ENCODE measurements at regions of chr9 and their contacts with region 1.

Region 1: DNA sequence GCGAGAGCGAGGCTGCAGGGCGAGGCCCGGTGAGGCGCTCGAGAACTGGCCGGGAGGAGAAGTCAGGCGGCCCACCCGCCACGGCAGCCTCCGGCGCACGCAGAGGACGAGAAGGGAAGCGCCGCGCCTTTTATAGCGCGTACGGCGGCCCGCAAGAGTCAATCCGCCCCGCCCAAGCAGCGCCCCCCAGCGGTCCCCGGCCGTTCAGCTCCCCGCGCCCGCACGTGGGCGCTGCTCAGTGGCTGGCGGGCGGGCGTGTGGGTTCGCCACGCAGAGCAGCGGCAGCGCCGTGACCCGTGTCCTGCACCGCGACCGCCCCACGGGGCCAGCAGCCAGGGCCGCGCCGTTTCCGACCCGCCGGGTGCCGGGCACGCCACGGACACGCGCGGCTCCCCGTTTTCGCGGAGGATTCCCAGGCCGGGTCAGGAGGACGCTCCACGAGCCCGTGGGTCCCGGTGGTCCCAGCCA is 14.6 kb downstream of the LCN10 start:
- DNase-seq: peak; percentile 89 to 95 (median 93)
- H3K4me3 ChIP-seq: peak overlapping the region; percentile 73 to 99 (median 82)
- H3K27ac ChIP-seq: peak overlapping the region; percentile 54 to 84
- H3K4me1 ChIP-seq: peaks cover 4 to 43% (median 42%) of the 10 kb centered on the region in 4 experiments
- H3K27me3 ChIP-seq: no peaks in the 10 kb centered on the region

Region 2: GRCh38 chr9:136694236-136694942 is 33.7 kb before region 1 on chr9:
- CTCF ChIA-PET with region 1: interaction called, 24 read pairs
- POLR2A ChIA-PET with region 1: interaction called, 3 read pairs
- DNase-seq: peak in 2 of 3 donors; percentile 57 to 64
- H3K4me3 ChIP-seq: no peak overlapping the region
- H3K27ac ChIP-seq: no peak overlapping the region
- H3K4me1 ChIP-seq: peaks cover 0 to 42% (median 24%) of the 10 kb centered on the region in 4 experiments
- H3K27me3 ChIP-seq: no peaks in the 10 kb centered on the region

Region 3: DNA sequence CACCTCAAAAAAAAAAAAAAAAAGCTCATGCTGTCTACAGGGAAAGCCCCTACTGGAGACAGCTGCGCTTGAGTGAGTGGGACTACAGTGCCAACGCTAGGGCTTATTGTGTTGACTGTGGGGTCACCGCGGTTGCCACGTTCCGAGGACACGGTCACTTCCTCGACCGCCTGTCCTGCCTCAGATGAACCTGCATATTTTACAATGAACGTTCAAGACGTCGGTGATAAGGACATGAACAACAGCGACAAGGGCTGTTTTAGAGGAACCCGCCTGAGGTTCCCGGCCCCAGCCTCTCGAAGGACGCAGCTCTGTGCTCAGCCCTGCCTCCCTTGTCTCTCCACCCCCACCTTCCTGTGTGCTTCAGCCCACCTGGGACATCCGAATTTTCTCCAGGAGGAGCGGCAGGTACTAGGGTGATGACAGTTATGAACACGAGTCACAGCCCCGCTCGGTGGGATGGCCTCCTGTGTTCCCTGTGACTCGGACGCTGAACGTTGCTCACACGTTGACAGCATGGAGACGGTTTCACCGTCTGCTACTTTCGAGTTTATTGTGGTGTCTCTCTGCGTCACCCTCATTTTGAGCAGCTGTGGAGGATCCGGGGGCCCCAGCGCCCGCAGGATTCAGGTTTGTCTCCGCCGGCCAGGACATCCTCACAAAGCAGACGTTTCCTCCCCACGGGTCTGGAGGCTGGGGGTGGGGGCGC is 27.0 kb before region 1 on chr9:
- CTCF ChIA-PET with region 1: interaction called, 24 read pairs
- POLR2A ChIA-PET with region 1: interaction called, 44 read pairs
- DNase-seq: peak; percentile 78 to 96 (median 95)
- H3K4me3 ChIP-seq: peak overlapping the region in 5 of 7 experiments; percentile 22 to 63 (median 46)
- H3K27ac ChIP-seq: peak overlapping the region; percentile 64 to 84
- H3K4me1 ChIP-seq: peaks cover 2 to 83% (median 75%) of the 10 kb centered on the region in 4 experiments
- H3K27me3 ChIP-seq: no peaks in the 10 kb centered on the region

Region 4: GRCh38 chr9:136711751-136712689 is 16.1 kb before region 1 on chr9 and contains the start of gene DIPK1B:
- CTCF ChIA-PET with region 1: interaction called, 92 read pairs
- POLR2A ChIA-PET with region 1: interaction called, 128 read pairs
- DNase-seq: peak; percentile 58 to 87 (median 78)
- H3K4me3 ChIP-seq: peak within 1 kb of the TSS; percentile 60 to 91 (median 78)
- H3K27ac ChIP-seq: peak within 1 kb of the TSS; percentile 70 to 83
- H3K4me1 ChIP-seq: peaks cover 0 to 50% (median 47%) of the 10 kb centered on the region in 4 experiments
- H3K27me3 ChIP-seq: no peaks in the 10 kb centered on the region

Region 5: GRCh38 chr9:136742591-136743391 is 14.7 kb after region 1 on chr9 and contains the start of gene LCN10:
- CTCF ChIA-PET with region 1: interaction called, 38 read pairs
- POLR2A ChIA-PET with region 1: interaction called, 17 read pairs
- DNase-seq: no peak
- H3K4me3 ChIP-seq: peak within 1 kb of the TSS in 5 of 7 experiments; percentile 1 to 59 (median 36)
- H3K27ac ChIP-seq: no peak within 1 kb of the TSS
- H3K4me1 ChIP-seq: peaks cover 0 to 46% (median 33%) of the 10 kb centered on the region in 4 experiments
- H3K27me3 ChIP-seq: peaks cover 0 to 2% (median 0%) of the 10 kb centered on the region in 5 experiments

Region 6: GRCh38 chr9:136748666-136749611 is 20.8 kb after region 1 on chr9:
- CTCF ChIA-PET with region 1: interaction called, 38 read pairs
- POLR2A ChIA-PET with region 1: interaction called, 20 read pairs
- DNase-seq: peak in 2 of 3 donors; percentile 45 to 61
- H3K4me3 ChIP-seq: peak overlapping the region in 3 of 7 experiments; percentile 16 to 36 (median 32)
- H3K27ac ChIP-seq: peak overlapping the region in 1 of 2 experiments; percentile 27
- H3K4me1 ChIP-seq: peaks cover 0 to 50% (median 30%) of the 10 kb centered on the region in 4 experiments
- H3K27me3 ChIP-seq: no peaks in the 10 kb centered on the region

Region 7: GRCh38 chr9:136757328-136757727 is 29.2 kb after region 1 on chr9:
- CTCF ChIA-PET with region 1: interaction called, 22 read pairs
- POLR2A ChIA-PET with region 1: interaction called, 6 read pairs
- DNase-seq: no peak
- H3K4me3 ChIP-seq: no peak overlapping the region
- H3K27ac ChIP-seq: no peak overlapping the region
- H3K4me1 ChIP-seq: peaks cover 0 to 17% (median 8%) of the 10 kb centered on the region in 4 experiments
- H3K27me3 ChIP-seq: no peaks in the 10 kb centered on the region